SK-N-SH (cell line): ENCODE measurements at regions of chr6 and their contacts with region 1.

Region 1: GRCh38 chr6:36851149-36851614 is 11.9 kb upstream of the CPNE5 start:
- DNase-seq: peak; percentile 61
- H3K4me3 ChIP-seq: no peak overlapping the region; a peak in 1 of 4 replicates
- H3K27ac ChIP-seq: no peak overlapping the region
- H3K4me1 ChIP-seq: peaks cover 10 to 13% of the 10 kb centered on the region in 2 experiments; a peak in 2 of 4 replicates
- H3K27me3 ChIP-seq: no peaks in the 10 kb centered on the region
- CTCF ChIP-seq: peak; percentile 75
- EP300 ChIP-seq: no peak
- RAD21 ChIP-seq: peak; percentile 83

Region 2: DNA sequence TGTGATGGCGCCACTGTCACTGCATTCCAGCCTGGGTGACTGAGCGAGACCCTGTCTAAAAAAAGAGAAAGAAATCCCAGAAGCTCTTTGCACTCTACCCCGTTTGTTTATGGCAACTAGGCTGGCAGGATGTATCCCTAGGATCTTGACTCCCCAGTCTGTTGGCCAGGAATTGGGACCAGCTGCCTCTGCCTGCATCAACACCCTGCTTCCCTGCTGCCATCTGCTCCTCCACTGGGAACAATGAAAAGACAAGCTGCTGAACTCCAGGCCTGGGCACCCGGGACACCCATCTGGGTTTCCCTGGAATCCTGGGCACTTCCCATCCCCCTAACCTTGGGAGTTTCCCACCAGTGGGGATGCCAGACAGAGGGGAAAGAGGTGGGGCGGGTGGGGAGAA is 76.9 kb before region 1 on chr6:
- CTCF ChIA-PET with region 1: interaction called, 200 read pairs
- POLR2A ChIA-PET with region 1: no interaction called
- DNase-seq: no peak
- H3K4me3 ChIP-seq: no peak overlapping the region
- H3K27ac ChIP-seq: no peak overlapping the region
- H3K4me1 ChIP-seq: peaks cover 9% of the 10 kb centered on the region in 2 experiments; a peak in 3 of 4 replicates
- H3K27me3 ChIP-seq: 0 out of 2 replicates have a peak, but pooled peaks cover 7% of the 10 kb centered on the region
- CTCF ChIP-seq: no peak
- EP300 ChIP-seq: no peak
- RAD21 ChIP-seq: no peak

Region 3: DNA sequence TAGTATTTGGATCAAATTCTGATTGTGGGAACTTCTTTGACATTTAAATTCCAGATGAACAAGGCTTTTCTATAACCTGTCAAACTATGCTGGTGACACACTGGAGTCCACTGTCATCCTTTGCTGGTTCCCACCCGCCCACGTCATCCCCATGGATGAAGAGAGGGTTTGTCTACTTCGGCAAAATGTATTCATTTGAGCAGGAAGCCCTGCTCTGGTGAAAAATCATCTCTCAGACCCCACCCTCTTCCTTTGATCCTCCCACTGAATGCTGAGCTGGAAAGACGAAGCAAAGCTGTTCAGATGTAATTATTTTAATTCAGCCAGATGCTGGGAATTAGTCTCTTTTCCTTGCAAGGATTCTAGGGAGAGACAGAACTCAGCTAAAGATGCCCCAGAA is 62.4 kb before region 1 on chr6:
- CTCF ChIA-PET with region 1: interaction called, 11 read pairs
- POLR2A ChIA-PET with region 1: interaction called, 3 read pairs
- DNase-seq: no peak
- H3K4me3 ChIP-seq: no peak overlapping the region
- H3K27ac ChIP-seq: no peak overlapping the region
- H3K4me1 ChIP-seq: peaks cover 0 to 14% of the 10 kb centered on the region in 2 experiments; a peak in 2 of 4 replicates
- H3K27me3 ChIP-seq: no peaks in the 10 kb centered on the region
- CTCF ChIP-seq: no peak
- EP300 ChIP-seq: no peak
- RAD21 ChIP-seq: no peak

Region 4: DNA sequence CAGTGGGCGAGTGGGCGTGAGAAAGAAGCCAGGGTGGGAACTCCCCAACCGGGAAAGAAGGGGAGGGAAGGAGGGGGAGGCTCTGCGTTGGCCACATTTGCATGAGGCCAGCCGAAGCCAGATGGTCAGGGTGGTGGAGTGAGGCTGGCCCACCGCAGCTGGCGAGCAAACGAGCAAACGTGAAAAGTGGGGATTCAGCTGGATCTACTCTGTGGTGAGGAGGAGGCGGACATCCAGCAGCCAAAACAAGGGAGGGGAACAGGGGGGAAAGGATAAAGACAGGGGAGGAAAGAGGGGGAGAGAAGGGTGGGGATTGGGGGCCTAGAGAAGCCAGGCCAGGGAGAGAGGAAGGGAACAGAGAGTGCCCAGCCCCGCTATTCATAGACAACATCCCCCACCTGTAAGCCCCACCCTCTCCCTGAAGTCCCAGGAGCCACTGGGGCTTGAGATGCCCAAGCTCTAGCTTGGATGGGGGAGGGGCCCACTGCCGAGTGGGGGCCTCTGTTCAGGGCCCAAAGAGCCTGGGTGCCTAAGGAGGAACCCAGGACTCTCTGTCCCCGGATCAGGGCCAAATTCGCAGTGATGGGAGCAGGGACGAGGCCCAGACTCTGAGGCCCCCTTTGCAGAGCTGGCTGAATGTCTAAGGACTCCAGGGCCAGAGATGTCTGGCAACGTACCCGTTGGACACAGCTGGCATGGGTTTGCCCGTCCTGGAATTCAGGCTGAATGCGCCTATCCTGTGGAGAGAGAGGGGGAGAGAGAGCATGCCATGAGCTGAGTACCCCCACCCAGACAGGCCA is 57.1 kb before region 1 on chr6:
- CTCF ChIA-PET with region 1: interaction called, 11 read pairs
- POLR2A ChIA-PET with region 1: interaction called, 3 read pairs
- DNase-seq: peak; percentile 72
- H3K4me3 ChIP-seq: no peak overlapping the region
- H3K27ac ChIP-seq: no peak overlapping the region; a peak in 1 of 4 replicates
- H3K4me1 ChIP-seq: peaks cover 0 to 18% of the 10 kb centered on the region in 2 experiments; a peak in 2 of 4 replicates
- H3K27me3 ChIP-seq: no peaks in the 10 kb centered on the region
- CTCF ChIP-seq: no peak
- EP300 ChIP-seq: no peak
- RAD21 ChIP-seq: no peak

Region 5: DNA sequence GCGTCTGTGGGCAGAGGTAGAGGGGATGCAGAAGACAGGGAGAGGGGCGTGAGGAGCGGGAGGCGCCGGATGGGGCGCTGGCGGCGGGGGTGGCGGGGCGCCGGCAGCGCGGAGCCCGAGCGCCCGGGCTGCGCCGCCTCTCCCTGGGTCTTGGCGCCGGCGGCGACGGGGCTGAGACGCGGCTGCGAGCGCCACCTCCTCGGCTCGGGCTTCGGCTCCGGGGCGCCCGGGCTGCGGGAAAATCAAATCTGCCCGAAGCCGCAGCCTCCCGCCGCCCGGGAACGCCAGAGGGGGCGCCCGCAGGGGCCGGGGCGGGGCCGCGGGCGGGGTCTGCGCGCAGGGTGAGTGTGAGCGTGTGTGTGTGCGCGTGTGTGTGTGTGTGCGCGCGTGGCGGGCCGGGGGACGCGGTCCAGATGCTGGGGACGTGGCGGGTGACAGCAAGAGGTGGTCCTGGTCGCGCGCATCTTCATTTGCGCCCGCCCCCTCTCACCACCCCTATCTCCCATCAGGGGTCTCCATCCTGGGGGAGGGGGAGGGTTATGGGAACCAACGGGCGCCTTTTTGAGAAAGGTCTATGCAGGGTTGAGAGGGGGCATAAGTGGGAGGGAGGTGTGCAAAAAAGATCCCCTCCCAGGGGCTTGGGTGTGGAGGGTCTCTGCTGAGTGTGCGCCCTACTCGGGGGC is 11.3 kb before region 1 on chr6:
- CTCF ChIA-PET with region 1: interaction called, 19 read pairs
- POLR2A ChIA-PET with region 1: no interaction called
- DNase-seq: peak; percentile 87
- H3K4me3 ChIP-seq: peak overlapping the region; percentile 55 to 62
- H3K27ac ChIP-seq: no peak overlapping the region
- H3K4me1 ChIP-seq: peaks cover 0 to 18% of the 10 kb centered on the region in 2 experiments; a peak in 1 of 4 replicates
- H3K27me3 ChIP-seq: peaks cover 12% of the 10 kb centered on the region
- CTCF ChIP-seq: peak; percentile 43
- EP300 ChIP-seq: no peak
- RAD21 ChIP-seq: no peak

Region 6: GRCh38 chr6:36865835-36866234 is 14.7 kb after region 1 on chr6:
- CTCF ChIA-PET with region 1: interaction called, 47 read pairs
- POLR2A ChIA-PET with region 1: no interaction called
- DNase-seq: no peak
- H3K4me3 ChIP-seq: no peak overlapping the region
- H3K27ac ChIP-seq: peak overlapping the region in 1 of 2 experiments; percentile 40; a peak in 1 of 4 replicates
- H3K4me1 ChIP-seq: peaks cover 0 to 24% of the 10 kb centered on the region in 2 experiments; a peak in 2 of 4 replicates
- H3K27me3 ChIP-seq: no peaks in the 10 kb centered on the region
- CTCF ChIP-seq: no peak
- EP300 ChIP-seq: no peak
- RAD21 ChIP-seq: no peak

Region 7: GRCh38 chr6:36874443-36875249 is 23.5 kb after region 1 on chr6 and contains the start of gene PPIL1:
- CTCF ChIA-PET with region 1: interaction called, 47 read pairs
- POLR2A ChIA-PET with region 1: interaction called, 3 read pairs
- DNase-seq: peak; percentile 94
- H3K4me3 ChIP-seq: peak within 1 kb of the TSS; percentile 76 to 87
- H3K27ac ChIP-seq: peak within 1 kb of the TSS; percentile 95 to 100
- H3K4me1 ChIP-seq: peaks cover 0 to 10% of the 10 kb centered on the region in 2 experiments; a peak in 2 of 4 replicates
- H3K27me3 ChIP-seq: no peaks in the 10 kb centered on the region
- CTCF ChIP-seq: no peak
- EP300 ChIP-seq: peak in 1 of 2 experiments; percentile 6; a peak in 2 of 4 replicates
- RAD21 ChIP-seq: no peak
- polyA plus RNA-seq, gene PPIL1: 36.6 and 48.4 TPM in 2 replicates

Region 8: DNA sequence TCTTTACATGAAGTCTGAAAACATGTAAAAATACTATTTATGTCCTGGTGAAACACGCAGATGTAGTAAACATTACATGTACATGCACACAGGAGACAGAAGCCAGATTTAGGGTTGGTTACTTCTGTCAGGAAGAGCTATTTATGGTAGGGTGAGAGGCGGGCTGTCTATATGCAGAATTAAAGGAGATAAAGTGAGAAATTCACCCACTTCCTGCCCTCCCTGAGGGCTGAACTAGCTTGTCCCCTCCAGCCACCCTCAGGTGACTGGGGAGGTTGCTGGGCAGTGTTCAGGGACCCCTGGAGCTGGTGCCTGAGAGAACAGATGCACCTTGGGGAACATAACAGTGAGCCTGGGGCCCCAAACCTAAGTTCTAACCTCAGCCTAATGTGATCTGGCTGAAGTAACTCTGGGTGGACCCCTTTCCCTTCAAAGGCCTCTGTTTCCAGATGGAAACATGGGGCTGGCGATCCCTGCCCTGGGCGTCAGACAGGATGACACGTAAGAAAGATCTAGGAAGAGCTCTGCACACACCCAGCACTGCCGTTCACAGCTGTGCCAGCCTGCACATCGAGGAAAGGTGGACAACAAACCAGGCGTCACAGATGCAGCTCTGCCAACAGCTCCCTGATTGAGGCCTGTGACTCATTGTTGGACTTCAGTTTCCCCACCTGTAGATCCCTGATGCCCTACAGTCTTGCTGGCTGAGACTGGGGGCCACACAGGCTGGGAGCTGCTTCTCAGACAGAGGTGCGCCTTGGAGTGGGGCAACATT is 104.7 kb after region 1 on chr6:
- CTCF ChIA-PET with region 1: no interaction called
- POLR2A ChIA-PET with region 1: no interaction called
- DNase-seq: no peak
- H3K4me3 ChIP-seq: no peak overlapping the region
- H3K27ac ChIP-seq: no peak overlapping the region
- H3K4me1 ChIP-seq: peaks cover 0 to 2% of the 10 kb centered on the region in 2 experiments; a peak in 1 of 4 replicates
- H3K27me3 ChIP-seq: no peaks in the 10 kb centered on the region
- CTCF ChIP-seq: no peak
- EP300 ChIP-seq: no peak
- RAD21 ChIP-seq: no peak